Vagina (tissue), 2 donors: ENCODE measurements at regions of chr10 and their contacts with region 1.

Region 1: GRCh38 chr10:28676968-28677887 is at the start of gene BAMBI:
- DNase-seq: peak in 1 of 2 donors; percentile 90
- H3K4me3 ChIP-seq: peak within 1 kb of the TSS; percentile 53 to 67
- H3K27ac ChIP-seq: peak within 1 kb of the TSS; percentile 75
- H3K4me1 ChIP-seq: peaks cover 25% of the 10 kb centered on the region
- H3K27me3 ChIP-seq: no peaks in the 10 kb centered on the region
- CTCF ChIP-seq: peak in 1 of 3 experiments; percentile 59
- POLR2A ChIP-seq: peak in 1 of 2 donors; percentile 95
- total RNA-seq, gene BAMBI: 10.8 TPM

Region 2: GRCh38 chr10:28606568-28606967 is 70.7 kb before region 1 on chr10:
- intact Hi-C with region 1: no loop called
- DNase-seq: no peak
- H3K4me3 ChIP-seq: no peak overlapping the region
- H3K27ac ChIP-seq: no peak overlapping the region
- H3K4me1 ChIP-seq: peaks cover 41% of the 10 kb centered on the region
- H3K27me3 ChIP-seq: no peaks in the 10 kb centered on the region
- CTCF ChIP-seq: no peak
- POLR2A ChIP-seq: no peak

Region 3: DNA sequence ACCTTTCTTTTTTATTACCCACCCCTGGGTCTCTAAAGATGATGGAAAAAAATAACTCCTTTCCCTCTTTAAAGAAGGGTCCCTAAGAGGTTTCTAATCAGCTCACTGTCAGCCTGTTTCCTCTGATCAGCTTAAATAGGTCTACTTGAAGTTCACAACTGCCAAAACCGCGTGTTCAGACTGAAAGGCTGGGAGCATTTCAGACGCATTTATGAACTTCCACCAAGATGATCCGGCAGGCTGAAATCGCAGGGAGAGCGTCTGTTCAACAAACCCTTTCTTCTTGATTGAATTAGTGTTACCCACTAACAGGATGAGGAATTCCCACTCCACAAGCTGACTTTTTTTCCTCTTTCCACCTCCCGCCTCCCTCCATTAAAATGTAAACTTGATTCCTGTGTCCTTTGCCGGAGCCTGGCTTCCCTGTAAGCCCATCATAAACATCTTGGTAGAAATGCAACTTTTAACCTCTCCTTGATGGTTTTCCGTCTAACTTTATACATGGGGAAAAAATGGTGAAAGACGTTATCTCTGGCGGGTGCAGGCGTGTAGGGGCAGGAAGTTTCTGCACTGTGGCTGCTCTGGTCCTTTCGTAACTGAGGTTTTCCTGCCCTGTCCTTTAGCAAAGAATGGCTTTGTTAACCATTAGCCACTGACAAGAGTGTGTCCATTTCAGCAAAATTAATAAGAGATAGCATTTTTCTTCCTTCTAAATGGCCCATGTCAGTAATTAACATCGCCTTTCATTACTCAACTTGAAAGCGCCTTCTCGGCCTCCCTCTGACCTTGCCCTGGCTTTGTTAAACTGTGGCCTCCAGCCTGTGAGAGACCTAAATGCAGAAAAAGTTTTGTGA is 130.8 kb after region 1 on chr10:
- intact Hi-C with region 1: loop called (anchors 5 kb)
- DNase-seq: peak in 1 of 2 donors; percentile 22
- H3K4me3 ChIP-seq: no peak overlapping the region
- H3K27ac ChIP-seq: peak overlapping the region; percentile 2
- H3K4me1 ChIP-seq: no peaks in the 10 kb centered on the region
- H3K27me3 ChIP-seq: no peaks in the 10 kb centered on the region
- CTCF ChIP-seq: peak in 1 of 3 experiments; percentile 13
- POLR2A ChIP-seq: no peak

Region 4: GRCh38 chr10:28984431-28984830 is 307.2 kb after region 1 on chr10:
- intact Hi-C with region 1: loop called (anchors 10 kb)
- DNase-seq: peak in 1 of 2 donors; percentile 93
- H3K4me3 ChIP-seq: no peak overlapping the region
- H3K27ac ChIP-seq: no peak overlapping the region
- H3K4me1 ChIP-seq: peaks cover 9% of the 10 kb centered on the region
- H3K27me3 ChIP-seq: no peaks in the 10 kb centered on the region
- CTCF ChIP-seq: no peak
- POLR2A ChIP-seq: no peak